ENCODE measurements at regions of chr1 and their contacts with region 1.

Region 1: GRCh38 chr1:93437976-93438605 is 9.8 kb upstream of the FNBP1L start:
- DNase-seq: no peak
- H3K4me3 ChIP-seq: no peak overlapping the region
- H3K27ac ChIP-seq: no peak overlapping the region
- H3K4me1 ChIP-seq: peaks cover 11% of the 10 kb centered on the region
- H3K27me3 ChIP-seq: no peaks in the 10 kb centered on the region
- CTCF ChIP-seq: peak; percentile 81

Region 2: GRCh38 chr1:93411000-93411399 is 27.1 kb before region 1 on chr1:
- intact Hi-C with region 1: no loop called
- DNase-seq: no peak
- H3K4me3 ChIP-seq: no peak overlapping the region
- H3K27ac ChIP-seq: no peak overlapping the region
- H3K4me1 ChIP-seq: peaks cover 4% of the 10 kb centered on the region
- H3K27me3 ChIP-seq: no peaks in the 10 kb centered on the region
- CTCF ChIP-seq: no peak

Region 3: GRCh38 chr1:93814059-93814794 is 376.1 kb after region 1 on chr1:
- intact Hi-C with region 1: loop called (anchors 10 kb)
- DNase-seq: no peak
- H3K4me3 ChIP-seq: no peak overlapping the region
- H3K27ac ChIP-seq: no peak overlapping the region
- H3K4me1 ChIP-seq: peaks cover 51% of the 10 kb centered on the region
- H3K27me3 ChIP-seq: no peaks in the 10 kb centered on the region
- CTCF ChIP-seq: peak; percentile 99

Region 4: DNA sequence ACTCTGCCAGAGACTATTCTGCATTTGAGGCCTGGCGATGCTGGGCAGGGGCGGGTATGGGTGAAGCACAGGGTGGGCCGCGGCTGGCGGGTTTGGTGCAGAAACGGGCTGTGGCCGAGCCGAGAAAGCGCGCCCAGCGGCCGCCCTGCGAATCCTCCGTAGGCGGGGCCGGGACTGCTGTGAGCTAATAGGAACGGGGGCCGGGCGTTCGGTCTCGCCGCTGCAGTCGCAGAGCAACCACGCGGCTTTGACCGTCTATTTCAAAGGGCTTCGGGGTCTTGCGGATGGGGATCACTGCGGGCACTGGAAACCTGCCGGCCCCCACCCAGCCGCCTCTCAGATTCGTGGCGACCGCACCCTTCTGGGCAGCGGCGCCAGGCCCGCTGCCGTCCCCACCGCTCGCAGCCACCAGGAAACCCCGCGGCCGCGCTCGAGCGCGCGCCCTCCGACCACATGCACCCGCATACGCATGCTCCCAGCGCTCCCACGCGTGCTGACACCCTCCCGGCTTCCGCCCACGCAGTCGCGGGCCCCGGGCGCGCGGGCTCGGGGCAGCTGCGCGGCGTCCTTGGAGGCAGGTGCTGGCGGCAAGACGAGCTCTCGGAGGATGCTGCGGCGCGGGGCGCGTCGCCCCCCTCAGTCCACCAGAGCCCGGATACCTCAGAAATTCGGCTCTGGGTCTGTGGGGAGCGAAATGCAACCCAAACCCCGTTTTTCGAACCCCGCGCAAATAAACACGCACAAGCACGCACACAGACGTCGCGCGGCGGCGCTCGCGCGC is 408.3 kb after region 1 on chr1:
- intact Hi-C with region 1: loop called (anchors 10 kb)
- DNase-seq: peak; percentile 91
- H3K4me3 ChIP-seq: peak overlapping the region; percentile 86
- H3K27ac ChIP-seq: peak overlapping the region; percentile 98
- H3K4me1 ChIP-seq: peaks cover 49% of the 10 kb centered on the region
- H3K27me3 ChIP-seq: no peaks in the 10 kb centered on the region
- CTCF ChIP-seq: peak; percentile 63